Activated naive CD8-positive, alpha-beta T cell treated with anti-CD3 and anti-CD28 coated beads, Interleukin-2, amount 10 ng/mL, durations not matched to agents 7 days and 5 days (primary cell): ENCODE measurements at regions of chr1 and their contacts with region 1.

Region 1: DNA sequence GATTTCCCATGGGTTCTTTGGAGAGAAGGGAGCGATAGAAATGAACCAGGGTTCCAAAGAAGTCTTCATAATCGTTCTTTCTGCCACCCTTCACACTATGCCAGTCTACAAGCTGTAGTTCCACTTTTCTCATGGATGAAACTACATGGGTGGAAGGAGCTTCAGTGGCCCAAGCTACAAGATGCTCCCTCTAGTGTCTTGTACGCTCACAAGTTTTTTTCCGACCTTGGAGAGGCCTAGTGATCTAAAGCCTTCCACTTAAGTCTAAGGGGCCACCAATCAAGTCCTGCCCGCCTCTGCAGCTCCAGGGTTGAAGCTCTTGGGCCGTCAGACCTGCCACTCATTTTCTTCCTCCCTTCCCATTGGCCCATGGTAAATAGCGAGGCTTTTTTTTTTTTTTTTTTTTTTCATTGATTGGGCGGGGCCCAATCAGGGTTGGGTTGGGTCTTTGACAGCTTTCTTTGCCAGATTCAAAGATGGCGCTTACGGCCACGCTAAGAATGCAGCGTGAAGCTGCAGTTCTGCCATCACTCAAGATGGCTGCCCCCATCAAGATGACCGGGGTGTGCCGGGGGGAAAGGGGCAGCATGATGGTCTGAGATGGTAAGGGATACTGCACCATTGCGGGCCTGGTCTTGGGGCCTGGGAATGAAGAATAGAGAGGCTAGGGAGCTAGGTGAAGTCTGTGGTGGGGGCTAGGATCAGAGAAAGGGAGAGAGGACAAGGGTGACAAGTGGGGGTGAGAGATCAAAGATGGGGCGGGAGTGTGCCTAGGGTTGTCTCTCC is at the start of gene TOMM40L:
- DNase-seq: peak; percentile 81
- ATAC-seq: peak; percentile 96
- H3K4me3 Mint-ChIP-seq: peak within 1 kb of the TSS; percentile 99
- H3K27ac Mint-ChIP-seq: peak within 1 kb of the TSS; percentile 97
- H3K4me1 Mint-ChIP-seq: peaks cover 31% of the 10 kb centered on the region
- H3K27me3 Mint-ChIP-seq: no peaks in the 10 kb centered on the region
- total RNA-seq, gene TOMM40L: 13.7 to 17.4 TPM

Region 2: DNA sequence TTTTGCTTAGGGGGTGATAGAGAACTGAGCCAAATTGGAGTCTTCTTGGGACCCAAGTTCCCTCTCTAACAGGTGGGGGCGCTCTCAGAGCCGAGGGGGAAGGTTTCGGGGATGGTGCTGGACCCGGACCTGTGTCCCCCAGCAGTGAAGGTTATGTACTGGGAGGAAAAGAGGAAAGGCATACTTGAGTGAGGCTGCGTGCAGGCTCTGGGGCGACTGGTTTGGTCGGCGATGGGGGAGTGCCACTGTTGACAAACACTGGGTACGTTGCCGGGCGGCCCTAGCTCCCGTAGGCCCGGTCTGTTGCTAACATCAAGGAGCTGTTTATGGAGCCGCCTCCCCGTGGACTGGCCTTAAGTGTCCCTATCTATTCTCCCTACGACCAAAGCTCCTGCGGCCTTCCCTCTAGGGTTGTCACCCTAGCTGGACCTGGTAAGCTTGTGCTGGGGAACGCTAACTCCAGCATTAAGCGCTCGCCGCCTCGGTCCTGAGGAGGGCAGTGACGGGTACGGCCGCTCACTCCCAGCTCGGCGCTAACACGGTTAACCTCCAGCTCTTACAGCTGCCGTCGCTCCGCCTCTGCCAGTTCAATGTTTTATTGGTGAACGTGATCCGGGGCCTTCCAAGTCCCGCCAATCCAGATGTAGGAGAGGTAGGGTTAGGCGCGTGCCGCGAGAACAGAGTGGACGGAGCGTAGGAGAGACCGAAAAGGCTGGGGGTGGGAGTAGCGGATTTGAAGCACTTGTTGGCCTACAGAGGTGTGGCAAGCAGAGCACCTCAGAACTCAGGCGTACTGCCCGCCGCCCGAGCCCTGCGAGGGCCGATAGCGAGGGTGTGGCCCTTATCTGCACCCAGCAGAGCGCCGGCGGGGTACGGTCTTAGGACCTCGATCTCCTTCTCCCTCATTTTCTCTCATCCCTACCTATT is 59.7 kb before region 1 on chr1 and contains the start of gene PPOX:
- POLR2A ChIA-PET with region 1: interaction called, 15 read pairs
- DNase-seq: peak; percentile 87
- ATAC-seq: peak; percentile 95
- H3K4me3 Mint-ChIP-seq: peak within 1 kb of the TSS; percentile 92
- H3K27ac Mint-ChIP-seq: peak within 1 kb of the TSS; percentile 97
- H3K4me1 Mint-ChIP-seq: peaks cover 30% of the 10 kb centered on the region
- H3K27me3 Mint-ChIP-seq: no peaks in the 10 kb centered on the region
- total RNA-seq, gene PPOX: 47.0 to 53.0 TPM

Region 3: GRCh38 chr1:161185282-161185682 is 40.4 kb before region 1 on chr1:
- POLR2A ChIA-PET with region 1: interaction called, 38 read pairs
- DNase-seq: peak; percentile 63
- ATAC-seq: peak; percentile 81
- H3K4me3 Mint-ChIP-seq: peak overlapping the region; percentile 72
- H3K27ac Mint-ChIP-seq: peak overlapping the region; percentile 97
- H3K4me1 Mint-ChIP-seq: peaks cover 64% of the 10 kb centered on the region
- H3K27me3 Mint-ChIP-seq: no peaks in the 10 kb centered on the region

Region 4: GRCh38 chr1:161314201-161314981 is 88.7 kb after region 1 on chr1 and contains the start of gene SDHC:
- POLR2A ChIA-PET with region 1: interaction called, 11 read pairs
- DNase-seq: peak; percentile 91
- ATAC-seq: peak; percentile 98
- H3K4me3 Mint-ChIP-seq: peak within 1 kb of the TSS; percentile 99
- H3K27ac Mint-ChIP-seq: peak within 1 kb of the TSS; percentile 98
- H3K4me1 Mint-ChIP-seq: peaks cover 17% of the 10 kb centered on the region
- H3K27me3 Mint-ChIP-seq: peaks cover 2% of the 10 kb centered on the region
- total RNA-seq, gene SDHC: 148 to 150 TPM

Region 5: GRCh38 chr1:161382214-161383019 is 156.7 kb after region 1 on chr1:
- POLR2A ChIA-PET with region 1: interaction called, 13 read pairs
- DNase-seq: no peak
- ATAC-seq: peak; percentile 70
- H3K4me3 Mint-ChIP-seq: no peak overlapping the region
- H3K27ac Mint-ChIP-seq: no peak overlapping the region
- H3K4me1 Mint-ChIP-seq: peaks cover 16% of the 10 kb centered on the region
- H3K27me3 Mint-ChIP-seq: no peaks in the 10 kb centered on the region